PC-3 (cell line): ENCODE measurements at regions of chr10 and their contacts with region 1.

Region 1: GRCh38 chr10:89563861-89564478 is 28.6 kb upstream of the SLC16A12 start:
- DNase-seq: peak; percentile 73
- ATAC-seq: peak; percentile 74; the same call in 1 of the 2 replicates
- H3K4me3 ChIP-seq: no peak overlapping the region
- H3K27ac ChIP-seq: no peak overlapping the region
- H3K4me1 ChIP-seq: no peaks in the 10 kb centered on the region
- H3K27me3 ChIP-seq: no peaks in the 10 kb centered on the region
- CTCF ChIP-seq: peak; percentile 68

Region 2: GRCh38 chr10:89251409-89252224 is 312.4 kb before region 1 on chr10 and contains the start of gene LIPA:
- CTCF ChIA-PET with region 1: no interaction called
- POLR2A ChIA-PET with region 1: no interaction called
- intact Hi-C with region 1: loop called (anchors 10 kb)
- DNase-seq: peak; percentile 95
- ATAC-seq: peak; percentile 95
- H3K4me3 ChIP-seq: peak within 1 kb of the TSS; percentile 88
- H3K27ac ChIP-seq: no peak within 1 kb of the TSS; the same call in 1 of the 2 replicates
- H3K4me1 ChIP-seq: peaks cover 5% of the 10 kb centered on the region; the same call in 1 of the 2 replicates
- H3K27me3 ChIP-seq: no peaks in the 10 kb centered on the region
- CTCF ChIP-seq: no peak
- total RNA-seq, gene LIPA: 54.4 and 55.7 TPM in 2 replicates

Region 3: GRCh38 chr10:89466599-89467035 is 97.4 kb before region 1 on chr10:
- CTCF ChIA-PET with region 1: no interaction called
- POLR2A ChIA-PET with region 1: no interaction called
- intact Hi-C with region 1: loop called (anchors 1 kb)
- DNase-seq: peak; percentile 93
- ATAC-seq: peak; percentile 94
- H3K4me3 ChIP-seq: no peak overlapping the region; the same call in 1 of the 2 replicates
- H3K27ac ChIP-seq: 0 out of 2 replicates have a peak overlapping the region, but pooled peaks have one; percentile 16
- H3K4me1 ChIP-seq: peaks cover 32% of the 10 kb centered on the region
- H3K27me3 ChIP-seq: no peaks in the 10 kb centered on the region
- CTCF ChIP-seq: peak; percentile 72

Region 4: GRCh38 chr10:89522466-89522865 is 41.5 kb before region 1 on chr10:
- CTCF ChIA-PET with region 1: no interaction called
- POLR2A ChIA-PET with region 1: no interaction called
- intact Hi-C with region 1: no loop called
- DNase-seq: peak; percentile 10
- ATAC-seq: no peak
- H3K4me3 ChIP-seq: no peak overlapping the region
- H3K27ac ChIP-seq: no peak overlapping the region
- H3K4me1 ChIP-seq: no peaks in the 10 kb centered on the region
- H3K27me3 ChIP-seq: no peaks in the 10 kb centered on the region
- CTCF ChIP-seq: no peak

Region 5: GRCh38 chr10:89701238-89702120 is 137.5 kb after region 1 on chr10 and contains the start of gene KIF20B:
- CTCF ChIA-PET with region 1: no interaction called
- POLR2A ChIA-PET with region 1: no interaction called
- intact Hi-C with region 1: loop called (anchors 1 kb)
- DNase-seq: peak; percentile 94
- ATAC-seq: peak; percentile 98
- H3K4me3 ChIP-seq: peak within 1 kb of the TSS; percentile 82
- H3K27ac ChIP-seq: peak within 1 kb of the TSS; percentile 38
- H3K4me1 ChIP-seq: peaks cover 19% of the 10 kb centered on the region
- H3K27me3 ChIP-seq: no peaks in the 10 kb centered on the region
- CTCF ChIP-seq: 0 out of 2 replicates have a peak, but pooled peaks have one; percentile 20
- total RNA-seq, gene KIF20B: 10.8 and 12.6 TPM in 2 replicates